T-cell (primary cell): ENCODE measurements at regions of chr5 and their contacts with region 1.

Region 1: DNA sequence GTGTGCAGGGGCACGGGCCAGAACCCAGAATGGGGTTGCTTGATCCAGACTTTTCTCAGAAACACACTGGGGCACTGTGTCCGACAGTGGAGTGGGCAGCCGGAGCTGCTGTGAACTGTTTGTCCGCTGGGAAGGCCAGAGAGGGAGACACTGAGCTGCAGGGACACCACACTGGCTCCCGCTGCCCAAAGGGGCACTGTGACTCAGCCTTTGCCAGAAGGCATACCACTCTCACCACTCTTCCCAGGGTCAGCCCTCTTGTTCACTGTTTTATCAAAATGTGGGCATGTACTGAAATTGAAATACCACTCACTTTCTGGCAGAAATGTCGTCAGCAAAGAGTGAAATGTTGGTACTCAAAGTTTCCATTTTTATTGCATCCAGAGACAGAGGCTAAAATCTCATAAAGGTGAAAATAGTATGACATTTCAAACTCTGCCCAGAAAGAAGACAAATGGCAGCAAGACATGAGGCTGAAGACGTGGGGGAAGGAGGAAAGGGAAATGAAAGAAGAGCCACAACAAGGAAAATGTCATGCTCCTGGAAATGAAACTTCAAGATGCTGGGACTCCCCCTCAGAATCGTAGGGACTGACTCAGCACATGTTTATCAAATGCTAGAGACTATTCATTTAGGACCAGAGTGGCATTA is 4.5 kb upstream of the IL7R start:
- DNase-seq: peak in 16 of 35 experiments; percentile 4 to 76 (median 33)
- ATAC-seq: peak in 1 of 4 experiments; percentile 3
- H3K4me3 ChIP-seq: peak overlapping the region; percentile 18 to 83
- H3K4me3 Mint-ChIP-seq: peak overlapping the region; percentile 92 to 94 (median 92)
- H3K27ac ChIP-seq: peak overlapping the region; percentile 99
- H3K27ac Mint-ChIP-seq: peak overlapping the region; percentile 99 to 100
- H3K4me1 ChIP-seq: peaks cover 50 to 55% of the 10 kb centered on the region in 2 experiments
- H3K4me1 Mint-ChIP-seq: peaks cover 68 to 80% (median 79%) of the 10 kb centered on the region in 3 donors
- H3K27me3 ChIP-seq: no peaks in the 10 kb centered on the region
- H3K27me3 Mint-ChIP-seq: no peaks in the 10 kb centered on the region

Region 2: GRCh38 chr5:35672995-35673394 is 179.2 kb before region 1 on chr5:
- CTCF ChIA-PET with region 1: interaction called in 1 of 2 experiments, 4 read pairs
- POLR2A ChIA-PET with region 1: interaction called in 1 of 2 experiments, 13 read pairs
- DNase-seq: peak in 32 of 35 experiments; percentile 1 to 51 (median 18)
- ATAC-seq: peak; percentile 26 to 84 (median 42)
- H3K4me3 ChIP-seq: peak overlapping the region in 1 of 2 donors; percentile 38
- H3K4me3 Mint-ChIP-seq: peak overlapping the region in 1 of 3 donors; percentile 69
- H3K27ac ChIP-seq: peak overlapping the region; percentile 67
- H3K27ac Mint-ChIP-seq: peak overlapping the region; percentile 90 to 92
- H3K4me1 ChIP-seq: peaks cover 8 to 59% of the 10 kb centered on the region in 2 experiments
- H3K4me1 Mint-ChIP-seq: peaks cover 57 to 76% (median 60%) of the 10 kb centered on the region in 3 donors
- H3K27me3 ChIP-seq: no peaks in the 10 kb centered on the region
- H3K27me3 Mint-ChIP-seq: no peaks in the 10 kb centered on the region

Region 3: GRCh38 chr5:35785601-35786085 is 66.6 kb before region 1 on chr5:
- CTCF ChIA-PET with region 1: interaction called in 1 of 2 experiments, 11 read pairs
- POLR2A ChIA-PET with region 1: interaction called, 6 to 75 read pairs
- DNase-seq: peak in 2 of 35 experiments; percentile 25 to 44
- ATAC-seq: peak; percentile 48 to 90 (median 80)
- H3K4me3 ChIP-seq: no peak overlapping the region
- H3K4me3 Mint-ChIP-seq: peak overlapping the region; percentile 54 to 60 (median 55)
- H3K27ac ChIP-seq: no peak overlapping the region
- H3K27ac Mint-ChIP-seq: peak overlapping the region; percentile 83 to 91
- H3K4me1 ChIP-seq: peaks cover 29 to 60% of the 10 kb centered on the region in 2 experiments
- H3K4me1 Mint-ChIP-seq: peaks cover 85 to 89% (median 88%) of the 10 kb centered on the region in 3 donors
- H3K27me3 ChIP-seq: no peaks in the 10 kb centered on the region
- H3K27me3 Mint-ChIP-seq: no peaks in the 10 kb centered on the region

Region 4: GRCh38 chr5:35811108-35811741 is 41.0 kb before region 1 on chr5:
- CTCF ChIA-PET with region 1: interaction called in 1 of 2 experiments, 6 read pairs
- POLR2A ChIA-PET with region 1: interaction called, 5 to 178 read pairs
- DNase-seq: peak in 19 of 35 experiments; percentile 11 to 89 (median 32)
- ATAC-seq: peak; percentile 79 to 83 (median 82)
- H3K4me3 ChIP-seq: no peak overlapping the region
- H3K4me3 Mint-ChIP-seq: peak overlapping the region; percentile 52 to 62 (median 58)
- H3K27ac ChIP-seq: peak overlapping the region; percentile 97
- H3K27ac Mint-ChIP-seq: peak overlapping the region; percentile 94 to 96
- H3K4me1 ChIP-seq: peaks cover 49 to 58% of the 10 kb centered on the region in 2 experiments
- H3K4me1 Mint-ChIP-seq: peaks cover 65 to 73% (median 67%) of the 10 kb centered on the region in 3 donors
- H3K27me3 ChIP-seq: no peaks in the 10 kb centered on the region
- H3K27me3 Mint-ChIP-seq: no peaks in the 10 kb centered on the region

Region 5: GRCh38 chr5:35830587-35830986 is 21.6 kb before region 1 on chr5:
- CTCF ChIA-PET with region 1: interaction called in 1 of 2 experiments, 17 read pairs
- POLR2A ChIA-PET with region 1: interaction called, 7 to 40 read pairs
- DNase-seq: peak in 31 of 35 experiments; percentile 24 to 80 (median 53)
- ATAC-seq: peak; percentile 87 to 95 (median 90)
- H3K4me3 ChIP-seq: no peak overlapping the region
- H3K4me3 Mint-ChIP-seq: peak overlapping the region; percentile 32 to 57 (median 40)
- H3K27ac ChIP-seq: peak overlapping the region; percentile 66
- H3K27ac Mint-ChIP-seq: peak overlapping the region; percentile 91 to 99
- H3K4me1 ChIP-seq: peaks cover 42 to 69% of the 10 kb centered on the region in 2 experiments
- H3K4me1 Mint-ChIP-seq: peaks cover 92 to 94% (median 92%) of the 10 kb centered on the region in 3 donors
- H3K27me3 ChIP-seq: no peaks in the 10 kb centered on the region
- H3K27me3 Mint-ChIP-seq: no peaks in the 10 kb centered on the region

Region 6: DNA sequence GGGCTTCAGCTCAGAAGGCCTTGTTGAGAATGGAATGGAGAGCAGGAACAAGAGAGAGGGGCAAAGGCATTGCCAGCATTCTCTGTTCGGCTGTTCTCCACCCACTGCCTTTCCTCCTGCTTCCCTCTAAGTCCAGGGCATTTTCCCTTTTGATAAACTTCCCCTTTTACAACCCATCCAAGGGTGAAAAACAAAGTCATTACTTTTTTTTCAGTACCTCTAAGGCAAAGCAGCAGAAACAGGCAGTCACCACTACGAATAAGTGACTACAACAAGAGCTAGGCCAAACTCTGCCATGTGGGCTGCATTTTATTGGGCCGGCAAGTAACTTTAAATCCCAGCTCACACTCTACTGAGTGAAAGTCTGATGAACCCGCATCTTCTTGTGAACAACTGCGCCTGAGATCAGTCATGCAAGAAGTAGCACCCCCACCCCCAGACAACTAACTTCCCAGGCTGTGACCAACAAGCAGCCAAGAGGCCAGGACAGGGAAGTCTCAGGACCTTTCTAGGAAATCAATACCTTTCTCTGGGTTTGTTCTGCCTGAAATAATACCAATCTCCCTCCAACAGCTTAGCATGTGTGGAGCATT is 17.6 kb after region 1 on chr5:
- CTCF ChIA-PET with region 1: no interaction called
- POLR2A ChIA-PET with region 1: interaction called, 6 to 24 read pairs
- DNase-seq: no peak
- ATAC-seq: no peak
- H3K4me3 ChIP-seq: peak overlapping the region in 1 of 2 donors; percentile 2
- H3K4me3 Mint-ChIP-seq: peak overlapping the region in 2 of 3 donors; percentile 21 to 57
- H3K27ac ChIP-seq: peak overlapping the region; percentile 22
- H3K27ac Mint-ChIP-seq: peak overlapping the region; percentile 84
- H3K4me1 ChIP-seq: peaks cover 32 to 33% of the 10 kb centered on the region in 2 experiments
- H3K4me1 Mint-ChIP-seq: peaks cover 88 to 91% (median 88%) of the 10 kb centered on the region in 3 donors
- H3K27me3 ChIP-seq: no peaks in the 10 kb centered on the region
- H3K27me3 Mint-ChIP-seq: no peaks in the 10 kb centered on the region